AG04449 (cell line): ENCODE measurements at regions of chr1 and their contacts with region 1.

Region 1: DNA sequence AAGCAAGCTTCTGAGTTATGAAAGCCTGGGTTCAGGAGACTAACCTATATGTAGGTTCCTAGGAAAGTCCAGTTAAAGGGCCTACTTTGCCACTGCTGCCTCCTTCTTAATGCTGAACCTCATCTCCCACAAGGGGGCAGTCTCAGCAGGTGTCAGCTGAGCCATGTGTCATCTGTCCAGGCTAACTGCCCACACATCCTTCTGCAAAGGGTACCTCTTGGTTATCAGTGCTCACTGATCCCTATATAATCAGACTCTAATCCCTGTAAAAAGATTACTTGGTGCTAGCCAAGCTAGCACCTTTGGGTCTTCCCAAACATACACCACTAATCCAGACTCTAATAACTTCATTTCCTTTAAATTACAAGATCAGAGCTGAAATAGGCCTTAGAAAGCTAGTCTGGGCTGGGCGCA is 9.0 kb downstream of the PRDX1 start:
- DNase-seq: no peak
- H3K4me3 ChIP-seq: no peak overlapping the region
- CTCF ChIP-seq: peak; percentile 67

Region 2: GRCh38 chr1:45499415-45499769 is 13.3 kb before region 1 on chr1:
- CTCF ChIA-PET with region 1: interaction called, 23 read pairs
- POLR2A ChIA-PET with region 1: interaction called, 6 read pairs
- DNase-seq: no peak
- H3K4me3 ChIP-seq: peak overlapping the region; percentile 93
- CTCF ChIP-seq: no peak

Region 3: DNA sequence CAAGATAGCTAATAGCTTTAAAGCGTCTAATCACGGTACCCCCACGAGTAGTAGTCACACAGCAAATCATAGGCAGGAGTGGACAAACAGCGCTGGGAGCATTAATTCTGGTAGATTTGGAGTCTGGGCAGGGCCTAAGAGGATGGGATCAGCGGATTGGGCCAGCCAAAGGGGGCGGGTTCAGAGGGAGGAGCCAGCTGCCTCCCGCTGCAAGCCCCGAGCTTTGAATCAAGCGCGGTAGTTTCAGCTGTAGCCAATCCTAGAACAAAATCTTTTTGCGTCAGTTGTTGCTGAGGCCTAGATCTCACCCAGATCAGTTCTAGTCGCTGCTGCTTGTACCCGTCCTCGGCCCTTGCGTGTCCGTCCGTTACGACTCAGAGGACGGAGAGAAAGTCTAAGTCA is 70.6 kb after region 1 on chr1:
- CTCF ChIA-PET with region 1: interaction called, 13 read pairs
- POLR2A ChIA-PET with region 1: interaction called, 3 read pairs
- DNase-seq: peak; percentile 74
- H3K4me3 ChIP-seq: peak overlapping the region; percentile 96
- CTCF ChIP-seq: no peak